Activated CD4-positive, alpha-beta memory T cell treated with anti-CD3 and anti-CD28 coated beads for 36 hours (primary cell): ENCODE measurements at regions of chr5 and their contacts with region 1.

Region 1: GRCh38 chr5:151612689-151613427 is 21.7 kb upstream of the FAT2 start:
- DNase-seq: peak; percentile 75
- H3K4me3 Mint-ChIP-seq: peak overlapping the region; percentile 24
- H3K27ac Mint-ChIP-seq: peak overlapping the region; percentile 77
- H3K4me1 Mint-ChIP-seq: peaks cover 38% of the 10 kb centered on the region
- H3K27me3 Mint-ChIP-seq: no peaks in the 10 kb centered on the region

Region 2: GRCh38 chr5:151569132-151570046 is 43.5 kb before region 1 on chr5:
- CTCF ChIA-PET with region 1: no interaction called
- POLR2A ChIA-PET with region 1: interaction called, 3 read pairs
- intact Hi-C with region 1: loop called (anchors 1 kb)
- DNase-seq: peak; percentile 66
- H3K4me3 Mint-ChIP-seq: no peak overlapping the region
- H3K27ac Mint-ChIP-seq: no peak overlapping the region
- H3K4me1 Mint-ChIP-seq: peaks cover 9% of the 10 kb centered on the region
- H3K27me3 Mint-ChIP-seq: peaks cover 15% of the 10 kb centered on the region

Region 3: GRCh38 chr5:151598984-151599383 is 13.9 kb before region 1 on chr5:
- CTCF ChIA-PET with region 1: no interaction called
- POLR2A ChIA-PET with region 1: no interaction called
- intact Hi-C with region 1: loop called (anchors 2 kb)
- DNase-seq: peak; percentile 43
- H3K4me3 Mint-ChIP-seq: no peak overlapping the region
- H3K27ac Mint-ChIP-seq: no peak overlapping the region
- H3K4me1 Mint-ChIP-seq: peaks cover 4% of the 10 kb centered on the region
- H3K27me3 Mint-ChIP-seq: no peaks in the 10 kb centered on the region